ENCODE measurements at regions of chr9 and their contacts with region 1.

Region 1: DNA sequence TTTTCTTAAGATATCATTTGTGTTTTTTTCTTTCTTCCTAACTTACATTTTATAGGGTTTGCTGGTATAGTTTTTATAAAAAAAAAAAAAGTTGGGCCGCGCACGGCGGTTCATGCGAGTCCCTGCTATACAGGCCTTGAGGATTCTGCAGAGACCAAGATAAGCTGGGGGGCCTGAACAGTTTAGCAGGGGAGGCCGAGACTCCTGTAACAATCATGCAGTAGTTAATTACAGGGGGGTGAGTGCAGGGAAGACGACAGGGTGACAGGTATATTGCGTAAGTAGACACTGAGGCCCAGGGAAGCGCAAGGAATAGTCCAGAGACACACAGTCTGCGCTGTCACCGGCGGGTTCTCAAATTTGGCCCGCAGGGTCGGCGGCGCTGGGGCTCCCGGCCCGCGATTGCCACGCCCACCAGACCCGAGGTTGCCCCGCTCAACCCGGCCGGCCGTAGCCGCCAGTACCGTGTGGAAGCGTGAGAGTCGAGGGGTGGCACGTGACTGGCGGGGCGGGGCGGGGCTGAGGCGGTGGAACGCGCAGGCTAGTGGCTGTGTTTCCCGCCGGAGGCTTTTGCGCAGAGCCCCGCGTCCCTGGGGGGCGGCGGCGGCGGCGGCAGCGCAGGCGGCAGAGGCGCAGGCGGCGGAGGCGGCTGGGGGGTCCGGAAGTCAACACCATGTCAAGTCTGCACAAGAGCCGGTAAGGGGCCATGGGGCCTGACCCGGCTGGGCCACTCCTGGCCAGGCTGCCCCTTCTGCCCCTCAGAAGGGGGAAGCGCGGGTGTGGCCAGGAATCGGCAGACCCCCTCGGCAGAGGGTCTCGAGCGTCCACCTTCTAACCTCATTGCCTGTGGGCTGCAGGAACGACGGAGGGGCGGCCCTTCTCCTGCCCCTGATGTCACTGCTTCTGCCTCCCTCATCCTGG is at the start of gene TBC1D13:
- DNase-seq: peak; percentile 94
- total RNA-seq, gene TBC1D13: 15.7 TPM

Region 2: GRCh38 chr9:128771745-128772519 is 15.0 kb before region 1 on chr9 and contains the start of gene ZER1:
- intact Hi-C with region 1: loop called (anchors 1 kb)
- DNase-seq: peak; percentile 96
- total RNA-seq, gene ZER1: 51.8 TPM

Region 3: GRCh38 chr9:128818099-128818838 is 31.3 kb after region 1 on chr9 and contains the start of gene ENDOG:
- intact Hi-C with region 1: loop called (anchors 1 kb)
- DNase-seq: peak; percentile 99
- total RNA-seq, gene ENDOG: 47.1 TPM

Measured in cardiac septum (tissue), 1 donor.